ENCODE measurements at regions of chr10 and their contacts with region 1.

Region 1: GRCh38 chr10:5614155-5614721 is 52.2 kb downstream of the ASB13 start:
- DNase-seq: no peak
- ATAC-seq: peak; percentile 2
- H3K4me3 ChIP-seq: no peak overlapping the region
- H3K27ac ChIP-seq: peak overlapping the region in 1 of 2 donors; percentile 81
- H3K4me1 ChIP-seq: peaks cover 7 to 8% of the 10 kb centered on the region in 2 donors
- H3K27me3 ChIP-seq: no peaks in the 10 kb centered on the region

Region 2: DNA sequence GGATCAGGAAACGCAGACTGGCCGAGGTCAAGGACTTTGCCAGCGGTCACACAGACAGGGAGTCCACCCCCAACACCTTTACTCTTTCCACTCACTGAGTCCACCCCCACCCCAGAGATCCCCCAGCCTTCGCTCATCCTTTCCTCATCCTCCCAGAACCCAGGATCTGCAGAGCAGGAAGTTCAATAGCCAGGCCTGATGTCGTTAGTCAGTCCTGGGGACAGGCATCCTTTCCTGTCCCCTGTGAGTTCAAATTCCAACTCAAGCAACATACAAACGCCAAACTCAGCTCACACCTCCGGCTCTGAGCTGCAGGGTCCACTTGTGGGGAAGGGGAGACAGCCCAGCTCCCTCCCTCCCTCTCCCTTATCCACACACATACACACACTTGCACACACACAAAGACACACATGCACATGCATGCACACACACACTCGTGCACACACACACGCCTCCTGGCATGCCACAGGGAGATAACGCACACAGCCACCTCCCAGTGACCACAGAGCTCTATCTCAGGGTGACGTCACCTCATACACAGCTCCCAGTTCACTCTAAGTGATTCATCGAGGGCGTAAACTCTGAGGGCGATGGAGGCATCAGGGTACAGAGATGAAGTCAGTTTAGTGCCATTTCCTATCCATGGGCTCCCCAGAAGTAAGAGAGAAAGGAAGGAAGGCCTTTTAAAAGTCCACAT is 65.6 kb before region 1 on chr10:
- intact Hi-C with region 1: loop called in 1 of 2 experiments (anchors 5 kb)
- DNase-seq: peak; percentile 83 to 84
- ATAC-seq: peak; percentile 74
- H3K4me3 ChIP-seq: no peak overlapping the region
- H3K27ac ChIP-seq: peak overlapping the region; percentile 71 to 89
- H3K4me1 ChIP-seq: peaks cover 3 to 4% of the 10 kb centered on the region in 2 donors
- H3K27me3 ChIP-seq: no peaks in the 10 kb centered on the region

Region 3: DNA sequence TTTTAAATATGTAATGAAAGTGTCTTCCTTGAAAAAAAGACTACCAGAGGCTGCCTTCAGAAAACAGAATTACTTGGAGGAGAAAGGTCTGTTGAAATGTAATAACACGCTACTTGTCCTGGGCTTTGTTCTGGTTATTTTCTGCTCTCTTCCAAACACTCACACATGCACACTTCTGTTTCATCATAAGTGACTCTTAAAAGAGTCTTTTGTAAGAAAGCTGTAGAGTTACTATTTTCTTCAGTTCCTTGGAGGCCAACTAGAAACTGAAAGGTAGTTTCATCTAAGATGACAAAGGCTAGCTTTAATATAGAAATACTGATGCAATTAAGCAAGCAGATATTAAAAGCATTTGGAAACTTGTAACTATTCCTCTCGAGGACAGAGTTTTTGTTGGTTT is 109.5 kb after region 1 on chr10:
- intact Hi-C with region 1: no loop called
- DNase-seq: no peak
- ATAC-seq: no peak
- H3K4me3 ChIP-seq: no peak overlapping the region
- H3K27ac ChIP-seq: no peak overlapping the region
- H3K4me1 ChIP-seq: no peaks in the 10 kb centered on the region
- H3K27me3 ChIP-seq: no peaks in the 10 kb centered on the region